Endothelial cell of umbilical vein (primary cell): ENCODE measurements at regions of chr17 and their contacts with region 1.

Region 1: GRCh38 chr17:5065227-5065744 is 13.0 kb upstream of the ZFP3 start:
- DNase-seq: no peak
- H3K4me3 ChIP-seq: no peak overlapping the region
- H3K27ac ChIP-seq: no peak overlapping the region
- H3K4me1 ChIP-seq: no peaks in the 10 kb centered on the region
- H3K27me3 ChIP-seq: no peaks in the 10 kb centered on the region
- CTCF ChIP-seq: no peak
- POLR2A ChIP-seq: no peak

Region 2: GRCh38 chr17:4980644-4981216 is 84.6 kb before region 1 on chr17:
- CTCF ChIA-PET with region 1: interaction called, 20 read pairs
- POLR2A ChIA-PET with region 1: no interaction called
- dilution Hi-C with region 1: no loop called
- intact Hi-C with region 1: loop called (anchors 1 kb)
- DNase-seq: peak; percentile 64
- H3K4me3 ChIP-seq: no peak overlapping the region
- H3K27ac ChIP-seq: no peak overlapping the region
- H3K4me1 ChIP-seq: peaks cover 8% of the 10 kb centered on the region
- H3K27me3 ChIP-seq: no peaks in the 10 kb centered on the region
- CTCF ChIP-seq: peak; percentile 47 to 58
- POLR2A ChIP-seq: no peak

Region 3: GRCh38 chr17:5031365-5032082 is 33.8 kb before region 1 on chr17:
- CTCF ChIA-PET with region 1: interaction called, 72 read pairs
- POLR2A ChIA-PET with region 1: no interaction called
- dilution Hi-C with region 1: no loop called
- intact Hi-C with region 1: loop called (anchors 1 kb)
- DNase-seq: peak; percentile 73
- H3K4me3 ChIP-seq: peak overlapping the region in 2 of 3 experiments; percentile 24 to 66
- H3K27ac ChIP-seq: peak overlapping the region; percentile 26
- H3K4me1 ChIP-seq: peaks cover 5% of the 10 kb centered on the region
- H3K27me3 ChIP-seq: peaks cover 2% of the 10 kb centered on the region in 2 experiments
- CTCF ChIP-seq: peak; percentile 50 to 81
- POLR2A ChIP-seq: no peak

Region 4: DNA sequence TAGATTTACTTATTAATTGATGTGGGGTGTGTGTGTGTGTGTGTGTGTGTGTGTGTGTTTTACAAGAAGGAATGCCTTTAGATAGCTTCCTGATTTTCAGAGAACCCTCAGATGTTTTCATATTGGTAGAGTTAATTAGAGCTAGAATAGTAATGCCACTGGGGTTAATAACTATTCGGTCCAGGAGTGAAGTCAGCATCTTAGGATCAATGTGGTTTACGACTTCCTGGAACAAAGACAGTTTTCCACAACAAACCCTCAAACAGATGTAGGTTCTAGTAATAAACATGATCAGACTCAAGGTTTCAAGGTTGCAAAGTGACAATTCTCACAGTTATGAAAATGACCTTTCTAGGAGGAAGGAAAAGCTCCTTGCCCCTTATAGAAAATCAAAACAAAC is 17.8 kb before region 1 on chr17:
- CTCF ChIA-PET with region 1: interaction called, 11 read pairs
- POLR2A ChIA-PET with region 1: no interaction called
- dilution Hi-C with region 1: no loop called
- intact Hi-C with region 1: no loop called
- DNase-seq: peak; percentile 15
- H3K4me3 ChIP-seq: no peak overlapping the region
- H3K27ac ChIP-seq: no peak overlapping the region
- H3K4me1 ChIP-seq: peaks cover 6% of the 10 kb centered on the region
- H3K27me3 ChIP-seq: no peaks in the 10 kb centered on the region
- CTCF ChIP-seq: no peak
- POLR2A ChIP-seq: no peak